ENCODE measurements at regions of chr7 and their contacts with region 1.

Region 1: DNA sequence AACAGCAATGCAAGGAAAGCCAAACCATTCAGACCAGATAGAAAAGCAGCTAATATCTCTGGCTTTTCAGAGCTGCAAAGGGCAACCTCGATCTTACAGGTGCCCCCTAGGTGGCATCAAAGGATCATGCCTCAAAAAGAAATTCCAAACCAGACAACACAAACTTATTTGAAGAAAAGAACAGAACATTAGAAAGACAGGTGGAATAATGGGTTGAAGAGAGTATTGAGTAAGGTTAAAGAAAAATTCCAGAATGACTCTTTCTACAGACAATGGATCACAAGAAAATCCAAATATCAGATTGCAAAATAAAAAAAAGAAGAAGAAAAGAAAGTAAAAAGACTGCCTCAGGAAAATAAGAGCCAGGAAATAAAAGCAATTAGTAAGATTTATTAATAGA is 213.7 kb downstream of the ELMO1 start:
- DNase-seq: peak; percentile 54
- H3K4me3 ChIP-seq: no peak overlapping the region
- H3K27ac ChIP-seq: no peak overlapping the region
- H3K4me1 ChIP-seq: peaks cover 0 to 13% of the 10 kb centered on the region in 2 experiments; a peak in 2 of 4 replicates
- H3K27me3 ChIP-seq: no peaks in the 10 kb centered on the region
- CTCF ChIP-seq: peak; percentile 46
- EP300 ChIP-seq: no peak
- RAD21 ChIP-seq: peak; percentile 96

Region 2: DNA sequence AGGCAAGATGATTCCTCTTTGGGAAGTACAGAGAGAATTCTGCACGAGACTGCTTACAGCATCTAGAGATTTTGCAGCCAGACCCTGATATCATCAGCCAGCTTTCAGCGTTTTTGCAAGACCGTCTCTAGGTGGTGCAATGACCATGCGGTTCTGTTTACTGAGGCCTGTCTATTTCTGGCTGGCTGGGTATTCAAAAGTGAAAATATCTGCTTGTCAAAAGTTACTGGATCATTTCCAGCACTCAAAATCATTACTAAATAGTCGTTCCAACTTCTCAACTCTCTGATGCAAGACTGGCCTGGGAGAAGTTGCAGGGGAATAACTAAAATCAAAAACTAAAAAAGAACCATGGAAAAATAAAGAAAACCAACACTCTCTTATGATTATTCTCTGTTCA is 26.4 kb before region 1 on chr7:
- CTCF ChIA-PET with region 1: interaction called, 55 read pairs
- POLR2A ChIA-PET with region 1: no interaction called
- DNase-seq: peak; percentile 73
- H3K4me3 ChIP-seq: no peak overlapping the region
- H3K27ac ChIP-seq: peak overlapping the region in 1 of 2 experiments; percentile 29; a peak in 1 of 4 replicates
- H3K4me1 ChIP-seq: peaks cover 0 to 3% of the 10 kb centered on the region in 2 experiments; a peak in 2 of 4 replicates
- H3K27me3 ChIP-seq: no peaks in the 10 kb centered on the region
- CTCF ChIP-seq: peak; percentile 61
- EP300 ChIP-seq: no peak
- RAD21 ChIP-seq: peak; percentile 98

Region 3: GRCh38 chr7:37297546-37297945 is 62.6 kb after region 1 on chr7:
- CTCF ChIA-PET with region 1: no interaction called
- POLR2A ChIA-PET with region 1: no interaction called
- DNase-seq: no peak
- H3K4me3 ChIP-seq: no peak overlapping the region
- H3K27ac ChIP-seq: no peak overlapping the region
- H3K4me1 ChIP-seq: no peaks in the 10 kb centered on the region
- H3K27me3 ChIP-seq: no peaks in the 10 kb centered on the region
- CTCF ChIP-seq: no peak
- EP300 ChIP-seq: no peak
- RAD21 ChIP-seq: no peak

Region 4: GRCh38 chr7:37352974-37353948 is 118.3 kb after region 1 on chr7:
- CTCF ChIA-PET with region 1: interaction called, 38 read pairs
- POLR2A ChIA-PET with region 1: no interaction called
- DNase-seq: peak; percentile 49
- H3K4me3 ChIP-seq: no peak overlapping the region
- H3K27ac ChIP-seq: no peak overlapping the region
- H3K4me1 ChIP-seq: peaks cover 0 to 6% of the 10 kb centered on the region in 2 experiments; a peak in 2 of 4 replicates
- H3K27me3 ChIP-seq: no peaks in the 10 kb centered on the region
- CTCF ChIP-seq: no peak
- EP300 ChIP-seq: no peak
- RAD21 ChIP-seq: peak; percentile 75

Region 5: GRCh38 chr7:37495574-37496184 is 260.8 kb after region 1 on chr7:
- CTCF ChIA-PET with region 1: interaction called, 49 read pairs
- POLR2A ChIA-PET with region 1: no interaction called
- DNase-seq: peak; percentile 63
- H3K4me3 ChIP-seq: no peak overlapping the region
- H3K27ac ChIP-seq: no peak overlapping the region
- H3K4me1 ChIP-seq: no peaks in the 10 kb centered on the region
- H3K27me3 ChIP-seq: no peaks in the 10 kb centered on the region
- CTCF ChIP-seq: peak; percentile 68
- EP300 ChIP-seq: no peak
- RAD21 ChIP-seq: peak; percentile 69

Region 6: DNA sequence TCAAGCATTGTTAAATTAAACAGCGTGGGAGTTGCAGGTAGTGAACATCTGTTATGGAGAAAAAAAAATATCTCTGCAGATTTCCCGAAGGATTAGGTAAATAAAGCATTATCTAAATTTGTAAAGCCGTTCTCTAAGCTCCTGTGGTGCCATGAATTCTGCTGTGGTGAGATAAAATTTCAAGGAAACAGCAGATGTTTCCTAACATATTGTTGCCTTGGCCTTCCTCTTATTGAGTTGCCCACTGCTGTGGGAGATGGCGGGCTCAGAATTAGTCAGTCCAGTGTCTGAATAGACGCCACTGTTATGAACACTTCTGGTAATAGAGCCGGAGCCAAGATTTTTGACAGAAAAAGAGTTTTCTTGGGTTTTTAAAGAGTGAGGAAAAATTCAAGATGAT is 296.3 kb after region 1 on chr7:
- CTCF ChIA-PET with region 1: interaction called, 10 read pairs
- POLR2A ChIA-PET with region 1: no interaction called
- DNase-seq: no peak
- H3K4me3 ChIP-seq: no peak overlapping the region
- H3K27ac ChIP-seq: no peak overlapping the region
- H3K4me1 ChIP-seq: no peaks in the 10 kb centered on the region
- H3K27me3 ChIP-seq: no peaks in the 10 kb centered on the region
- CTCF ChIP-seq: no peak
- EP300 ChIP-seq: no peak
- RAD21 ChIP-seq: no peak

Region 7: DNA sequence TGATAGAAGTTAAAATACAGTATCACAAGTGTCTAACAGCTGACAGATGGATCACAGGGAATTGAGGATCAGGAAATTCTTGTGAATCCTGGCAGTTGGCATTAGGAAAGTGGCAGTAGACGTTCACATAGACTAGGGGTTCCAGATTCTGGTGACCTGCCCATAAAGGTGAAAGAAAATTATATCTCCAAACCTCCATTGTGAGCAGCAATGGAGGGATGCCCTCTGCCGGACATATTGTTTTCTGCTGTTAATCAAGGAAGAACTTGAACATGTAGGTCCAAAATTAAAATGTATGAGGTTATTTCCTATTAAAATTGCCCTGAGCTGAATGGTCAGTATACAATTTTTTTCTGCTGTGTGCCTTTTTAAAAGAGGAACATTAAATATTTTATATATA is 618.5 kb after region 1 on chr7:
- CTCF ChIA-PET with region 1: interaction called, 44 read pairs
- POLR2A ChIA-PET with region 1: no interaction called
- DNase-seq: peak; percentile 32
- H3K4me3 ChIP-seq: no peak overlapping the region; a peak in 1 of 4 replicates
- H3K27ac ChIP-seq: no peak overlapping the region
- H3K4me1 ChIP-seq: no peaks in the 10 kb centered on the region
- H3K27me3 ChIP-seq: no peaks in the 10 kb centered on the region
- CTCF ChIP-seq: peak; percentile 51
- EP300 ChIP-seq: no peak
- RAD21 ChIP-seq: peak; percentile 64

Measured in SK-N-SH (cell line).